ENCODE measurements at regions of chr11 and their contacts with region 1.

Region 1: GRCh38 chr11:72599325-72600122 is 74.7 kb downstream of the PDE2A start:
- DNase-seq: no peak
- ATAC-seq: peak; percentile 13
- H3K4me3 ChIP-seq: no peak overlapping the region
- H3K4me1 ChIP-seq: no peaks in the 10 kb centered on the region
- CTCF ChIP-seq: no peak

Region 2: DNA sequence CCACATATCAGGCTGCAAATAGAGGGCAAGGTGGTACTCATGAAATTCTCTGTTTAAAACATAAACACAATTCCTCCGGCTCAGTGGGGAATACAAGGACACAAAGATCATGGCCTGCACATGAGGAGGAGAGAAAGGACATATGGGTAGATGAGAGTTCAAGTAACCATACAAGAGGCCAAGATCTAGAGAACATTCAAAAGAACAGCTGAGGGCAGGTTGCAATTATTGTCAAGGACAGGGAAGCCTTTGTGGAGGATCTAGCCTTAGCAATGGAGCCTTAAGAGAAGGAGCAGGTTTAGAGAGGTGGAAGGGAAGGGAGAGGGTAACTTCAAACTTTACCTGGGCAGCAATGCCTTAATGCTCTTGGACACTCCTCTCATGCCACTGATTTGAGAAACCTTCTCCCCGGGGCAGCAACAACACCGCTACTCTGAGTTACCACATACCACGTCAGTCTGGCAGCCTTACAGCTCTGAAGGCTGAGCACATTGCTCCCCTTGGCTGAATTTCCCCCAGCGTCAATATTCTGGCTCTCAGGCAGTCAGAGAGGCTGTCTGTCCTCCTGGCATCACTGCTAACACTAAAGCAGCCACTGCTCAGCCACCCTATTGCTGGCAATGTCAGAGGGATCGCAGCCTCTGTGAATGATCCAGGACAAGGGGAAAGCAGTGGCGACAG is 220.7 kb before region 1 on chr11:
- intact Hi-C with region 1: no loop called
- DNase-seq: peak in 1 of 3 donors; percentile 22
- ATAC-seq: no peak
- H3K4me3 ChIP-seq: no peak overlapping the region
- H3K4me1 ChIP-seq: no peaks in the 10 kb centered on the region
- CTCF ChIP-seq: no peak

Region 3: GRCh38 chr11:72642884-72643511 is 43.5 kb after region 1 on chr11:
- intact Hi-C with region 1: loop called in 1 of 2 experiments (anchors 5 kb)
- DNase-seq: peak; percentile 59 to 74 (median 61)
- ATAC-seq: peak; percentile 87
- H3K4me3 ChIP-seq: no peak overlapping the region
- H3K4me1 ChIP-seq: peaks cover 9% of the 10 kb centered on the region
- CTCF ChIP-seq: peak; percentile 96

Measured in mucosa of descending colon (tissue), 3 donors.